A673 (cell line): ENCODE measurements at regions of chr2 and their contacts with region 1.

Region 1: DNA sequence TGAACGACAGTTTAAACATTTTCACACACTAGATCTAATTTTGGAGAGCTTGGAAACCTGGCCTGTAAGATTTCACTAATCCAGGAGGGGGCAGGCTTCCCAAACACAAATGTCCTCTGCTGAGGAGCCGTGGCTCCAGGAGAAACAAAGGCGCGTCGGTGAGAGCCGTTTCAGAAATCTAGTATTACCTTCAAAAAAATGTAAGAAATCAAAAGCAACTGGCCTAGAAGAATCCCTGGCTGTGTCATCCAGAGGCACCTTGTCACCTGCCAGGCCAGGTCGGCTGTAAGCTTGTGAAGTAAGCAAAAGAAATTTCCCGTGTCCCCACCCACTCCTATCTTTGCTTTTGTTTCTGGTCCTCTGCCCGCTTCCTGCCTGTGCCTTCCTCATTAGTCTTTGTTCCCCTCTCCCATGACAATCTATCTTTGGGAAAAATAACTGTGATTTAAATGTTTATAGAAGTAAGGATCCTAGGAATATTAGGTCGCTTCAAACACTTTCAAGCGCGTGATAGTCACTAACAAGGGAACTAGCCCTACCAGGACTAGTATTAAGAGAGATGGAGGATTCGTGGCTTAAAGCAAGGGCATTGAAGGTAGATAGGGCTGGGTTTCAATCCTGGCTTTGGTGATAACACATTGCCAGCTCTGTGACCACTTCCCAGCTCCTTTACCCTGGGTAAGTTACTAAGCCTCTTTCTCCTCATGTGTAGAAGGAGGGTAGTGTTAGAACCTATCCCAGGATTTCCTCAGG is 99.5 kb upstream of the STK39 start:
- DNase-seq: peak; percentile 80
- H3K4me3 ChIP-seq: peak overlapping the region; percentile 46
- H3K27ac ChIP-seq: no peak overlapping the region
- H3K4me1 ChIP-seq: no peaks in the 10 kb centered on the region
- H3K27me3 ChIP-seq: no peaks in the 10 kb centered on the region
- CTCF ChIP-seq: peak; percentile 82

Region 2: DNA sequence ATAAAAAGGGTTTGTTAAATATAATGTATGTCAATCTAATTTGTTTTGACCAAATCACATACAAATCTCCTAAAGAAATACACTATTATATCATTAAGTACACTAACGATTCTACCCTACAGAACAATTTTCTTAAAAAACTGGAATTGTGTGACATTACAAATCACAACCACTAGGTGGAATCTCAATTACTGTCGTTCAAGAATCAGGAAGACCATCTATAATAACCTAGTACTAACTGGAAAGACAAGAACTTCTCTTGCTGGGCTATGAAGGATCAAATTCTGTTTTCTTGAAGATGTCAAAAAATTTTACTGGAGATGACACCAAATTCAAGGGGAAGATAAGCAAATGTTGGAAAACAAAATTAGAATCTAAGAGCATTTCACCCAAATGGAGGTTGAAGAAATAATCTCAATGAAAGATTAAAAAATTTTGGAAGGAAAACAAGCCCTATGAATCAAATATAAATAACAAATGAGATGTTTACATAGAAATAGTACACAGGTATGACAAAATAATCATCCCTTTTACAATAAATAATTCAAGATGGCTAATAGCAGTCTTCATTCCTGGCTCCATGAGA is 210.4 kb before region 1 on chr2:
- CTCF ChIA-PET with region 1: no interaction called
- POLR2A ChIA-PET with region 1: no interaction called
- intact Hi-C with region 1: loop called (anchors 10 kb)
- DNase-seq: peak; percentile 68
- H3K4me3 ChIP-seq: no peak overlapping the region
- H3K27ac ChIP-seq: peak overlapping the region; percentile 64
- H3K4me1 ChIP-seq: peaks cover 40% of the 10 kb centered on the region
- H3K27me3 ChIP-seq: no peaks in the 10 kb centered on the region
- CTCF ChIP-seq: peak; percentile 68

Region 3: DNA sequence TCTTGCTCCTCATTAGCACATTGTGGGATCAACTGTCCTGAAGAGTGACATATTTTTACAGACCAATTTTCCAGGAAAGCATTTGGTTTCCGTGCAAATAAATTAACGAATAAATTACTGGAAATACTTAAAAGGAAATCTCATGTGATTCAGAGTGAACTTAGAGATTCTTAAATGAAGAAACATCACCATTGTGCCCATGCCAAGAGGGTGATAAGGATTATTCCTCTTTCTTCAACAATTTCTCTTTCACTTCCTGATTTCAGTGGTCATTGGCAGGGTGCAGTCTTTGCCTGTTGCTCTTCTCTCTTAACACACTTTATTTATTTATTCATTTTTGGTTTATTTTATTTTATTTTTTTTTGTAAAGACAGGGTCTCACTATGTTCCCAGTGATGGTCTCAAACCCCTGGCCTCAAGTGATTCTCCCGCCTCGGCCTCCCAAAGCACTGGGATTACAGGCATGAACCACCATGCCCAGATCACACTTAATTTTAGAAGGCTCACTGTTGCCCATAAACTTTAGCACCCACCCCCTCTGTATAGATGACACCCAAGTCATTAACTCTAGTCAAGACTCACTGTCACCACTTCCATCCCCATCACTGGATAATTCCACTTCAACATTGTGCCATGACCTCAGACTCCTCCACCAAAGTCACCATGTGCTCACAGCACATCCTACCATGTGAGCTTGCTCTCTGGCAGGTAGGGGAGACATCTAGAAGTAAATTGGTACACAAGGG is 16.6 kb after region 1 on chr2:
- CTCF ChIA-PET with region 1: no interaction called
- POLR2A ChIA-PET with region 1: no interaction called
- intact Hi-C with region 1: loop called (anchors 1 kb)
- DNase-seq: no peak
- H3K4me3 ChIP-seq: no peak overlapping the region
- H3K27ac ChIP-seq: no peak overlapping the region
- H3K4me1 ChIP-seq: no peaks in the 10 kb centered on the region
- H3K27me3 ChIP-seq: no peaks in the 10 kb centered on the region
- CTCF ChIP-seq: no peak

Region 4: GRCh38 chr2:168687314-168687713 is 340.4 kb after region 1 on chr2:
- CTCF ChIA-PET with region 1: interaction called, 4 read pairs
- POLR2A ChIA-PET with region 1: no interaction called
- intact Hi-C with region 1: loop called (anchors 2 kb)
- DNase-seq: peak; percentile 22
- H3K4me3 ChIP-seq: no peak overlapping the region
- H3K27ac ChIP-seq: no peak overlapping the region
- H3K4me1 ChIP-seq: no peaks in the 10 kb centered on the region
- H3K27me3 ChIP-seq: no peaks in the 10 kb centered on the region
- CTCF ChIP-seq: peak; percentile 43

Region 5: GRCh38 chr2:168705534-168706470 is 358.9 kb after region 1 on chr2:
- CTCF ChIA-PET with region 1: no interaction called
- POLR2A ChIA-PET with region 1: no interaction called
- intact Hi-C with region 1: loop called (anchors 2 kb)
- DNase-seq: peak; percentile 26
- H3K4me3 ChIP-seq: no peak overlapping the region
- H3K27ac ChIP-seq: no peak overlapping the region
- H3K4me1 ChIP-seq: no peaks in the 10 kb centered on the region
- H3K27me3 ChIP-seq: no peaks in the 10 kb centered on the region
- CTCF ChIP-seq: peak; percentile 52

Region 6: GRCh38 chr2:168758970-168759820 is 412.3 kb after region 1 on chr2:
- CTCF ChIA-PET with region 1: interaction called, 3 read pairs
- POLR2A ChIA-PET with region 1: no interaction called
- intact Hi-C with region 1: loop called (anchors 1 kb)
- DNase-seq: peak; percentile 66
- H3K4me3 ChIP-seq: no peak overlapping the region
- H3K27ac ChIP-seq: no peak overlapping the region
- H3K4me1 ChIP-seq: no peaks in the 10 kb centered on the region
- H3K27me3 ChIP-seq: no peaks in the 10 kb centered on the region
- CTCF ChIP-seq: peak; percentile 64

Region 7: DNA sequence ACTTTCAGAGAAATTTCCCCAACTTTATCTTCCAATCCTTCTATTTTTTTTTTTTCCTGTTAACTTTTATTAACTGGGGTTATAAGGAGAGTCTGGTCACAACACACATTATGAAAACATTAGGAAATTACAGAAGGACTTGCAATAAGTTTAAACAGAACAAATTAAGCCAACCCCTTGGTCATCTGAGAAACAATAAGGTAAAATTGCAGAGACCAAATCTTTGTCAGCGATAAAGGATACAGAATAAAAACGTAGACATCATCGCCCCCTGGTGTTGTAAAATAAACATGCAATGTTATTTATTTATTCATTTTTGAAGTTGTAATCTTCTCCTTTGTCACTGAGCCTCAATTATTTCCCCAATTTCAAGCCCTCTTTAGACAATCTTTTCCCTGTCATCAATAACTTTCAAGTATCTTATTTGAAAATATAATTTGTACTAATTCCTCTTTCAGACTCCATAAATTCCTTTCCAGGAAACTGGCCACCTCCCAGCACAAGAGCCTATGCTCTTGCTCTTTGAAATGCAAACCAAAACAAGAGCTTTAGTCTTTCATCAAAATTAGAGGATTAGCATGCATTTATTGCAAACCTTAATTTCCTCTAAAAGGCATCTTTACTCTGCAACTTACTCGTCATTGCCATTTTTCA is 573.7 kb after region 1 on chr2:
- CTCF ChIA-PET with region 1: no interaction called
- POLR2A ChIA-PET with region 1: no interaction called
- intact Hi-C with region 1: loop called (anchors 2 kb)
- DNase-seq: peak; percentile 58
- H3K4me3 ChIP-seq: no peak overlapping the region
- H3K27ac ChIP-seq: no peak overlapping the region
- H3K4me1 ChIP-seq: no peaks in the 10 kb centered on the region
- H3K27me3 ChIP-seq: peaks cover 6% of the 10 kb centered on the region
- CTCF ChIP-seq: peak; percentile 65